CD8-positive, alpha-beta T cell (primary cell): ENCODE measurements at regions of chr17 and their contacts with region 1.

Region 1: DNA sequence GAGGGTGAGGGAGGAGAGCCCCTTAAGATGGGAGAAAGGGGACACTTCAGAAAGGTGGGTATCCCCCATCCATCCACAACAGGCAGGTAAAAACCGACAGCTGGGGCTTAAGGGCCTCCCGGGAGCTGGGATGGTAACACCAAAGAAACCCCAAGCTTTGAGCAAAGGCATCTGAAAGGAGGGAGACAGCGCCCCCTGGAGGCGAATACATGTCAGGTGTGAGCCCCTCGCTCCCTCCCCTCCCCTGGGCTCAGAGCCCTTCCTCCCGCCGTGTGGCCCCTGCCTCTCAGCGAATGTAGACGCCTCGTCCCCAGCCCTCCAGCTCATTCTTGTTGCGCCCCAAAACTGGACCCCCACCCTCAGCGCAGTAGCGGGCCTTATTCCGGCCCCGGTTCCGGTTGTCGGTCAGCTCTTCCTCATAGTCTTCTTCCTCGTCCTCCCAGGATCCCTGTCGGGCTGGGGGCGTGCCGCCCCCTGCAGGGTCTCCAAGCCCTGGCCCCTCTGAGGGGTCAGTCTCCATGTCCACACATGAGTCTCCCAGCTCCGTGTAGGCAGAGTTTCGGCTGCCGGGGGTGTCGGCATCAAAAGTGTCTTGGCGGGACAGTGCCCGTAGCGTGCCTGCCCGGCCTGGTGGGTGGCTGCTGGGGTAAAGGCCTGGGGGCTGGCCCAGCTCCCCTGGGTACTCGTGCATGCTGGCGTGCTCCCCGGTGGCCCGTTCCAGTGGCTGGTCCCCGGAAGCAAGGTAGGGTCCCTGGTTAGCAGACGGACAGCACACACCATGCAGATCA is 9.1 kb upstream of the ARL5C start:
- DNase-seq: peak; percentile 56 to 89 (median 83)
- ATAC-seq: peak; percentile 93
- H3K4me3 ChIP-seq: no peak overlapping the region
- H3K4me3 Mint-ChIP-seq: no peak overlapping the region
- H3K27ac ChIP-seq: no peak overlapping the region
- H3K27ac Mint-ChIP-seq: no peak overlapping the region
- H3K4me1 ChIP-seq: peaks cover 15% of the 10 kb centered on the region
- H3K4me1 Mint-ChIP-seq: peaks cover 23% of the 10 kb centered on the region
- H3K27me3 ChIP-seq: no peaks in the 10 kb centered on the region
- H3K27me3 Mint-ChIP-seq: no peaks in the 10 kb centered on the region
- CTCF ChIP-seq: peak; percentile 85

Region 2: GRCh38 chr17:38761612-38762011 is 413.5 kb before region 1 on chr17:
- CTCF ChIA-PET with region 1: no interaction called
- POLR2A ChIA-PET with region 1: no interaction called
- intact Hi-C with region 1: loop called in 1 of 2 experiments (anchors 5 kb)
- DNase-seq: peak in 3 of 9 experiments; percentile 41 to 52 (median 49)
- ATAC-seq: peak; percentile 52
- H3K4me3 ChIP-seq: no peak overlapping the region
- H3K4me3 Mint-ChIP-seq: no peak overlapping the region
- H3K27ac ChIP-seq: peak overlapping the region in 1 of 2 experiments; percentile 3
- H3K27ac Mint-ChIP-seq: peak overlapping the region; percentile 60
- H3K4me1 ChIP-seq: no peaks in the 10 kb centered on the region
- H3K4me1 Mint-ChIP-seq: peaks cover 8% of the 10 kb centered on the region
- H3K27me3 ChIP-seq: no peaks in the 10 kb centered on the region
- H3K27me3 Mint-ChIP-seq: no peaks in the 10 kb centered on the region
- CTCF ChIP-seq: no peak

Region 3: GRCh38 chr17:39062846-39063680 is 112.0 kb before region 1 on chr17:
- CTCF ChIA-PET with region 1: interaction called, 15 read pairs
- POLR2A ChIA-PET with region 1: no interaction called
- intact Hi-C with region 1: no loop called
- DNase-seq: no peak
- ATAC-seq: no peak
- H3K4me3 ChIP-seq: no peak overlapping the region
- H3K4me3 Mint-ChIP-seq: no peak overlapping the region
- H3K27ac ChIP-seq: no peak overlapping the region
- H3K27ac Mint-ChIP-seq: no peak overlapping the region
- H3K4me1 ChIP-seq: no peaks in the 10 kb centered on the region
- H3K4me1 Mint-ChIP-seq: peaks cover 13% of the 10 kb centered on the region
- H3K27me3 ChIP-seq: no peaks in the 10 kb centered on the region
- H3K27me3 Mint-ChIP-seq: no peaks in the 10 kb centered on the region
- CTCF ChIP-seq: no peak

Region 4: GRCh38 chr17:39164675-39165143 is 10.4 kb before region 1 on chr17:
- CTCF ChIA-PET with region 1: interaction called, 142 read pairs
- POLR2A ChIA-PET with region 1: interaction called, 3 read pairs
- intact Hi-C with region 1: no loop called
- DNase-seq: peak; percentile 53 to 90 (median 74)
- ATAC-seq: peak; percentile 89
- H3K4me3 ChIP-seq: peak overlapping the region; percentile 68 to 95
- H3K4me3 Mint-ChIP-seq: peak overlapping the region; percentile 91
- H3K27ac ChIP-seq: peak overlapping the region in 1 of 2 experiments; percentile 21
- H3K27ac Mint-ChIP-seq: peak overlapping the region; percentile 67
- H3K4me1 ChIP-seq: peaks cover 20% of the 10 kb centered on the region
- H3K4me1 Mint-ChIP-seq: peaks cover 33% of the 10 kb centered on the region
- H3K27me3 ChIP-seq: peaks cover 0 to 3% of the 10 kb centered on the region in 2 experiments
- H3K27me3 Mint-ChIP-seq: peaks cover 11% of the 10 kb centered on the region
- CTCF ChIP-seq: peak; percentile 80

Region 5: DNA sequence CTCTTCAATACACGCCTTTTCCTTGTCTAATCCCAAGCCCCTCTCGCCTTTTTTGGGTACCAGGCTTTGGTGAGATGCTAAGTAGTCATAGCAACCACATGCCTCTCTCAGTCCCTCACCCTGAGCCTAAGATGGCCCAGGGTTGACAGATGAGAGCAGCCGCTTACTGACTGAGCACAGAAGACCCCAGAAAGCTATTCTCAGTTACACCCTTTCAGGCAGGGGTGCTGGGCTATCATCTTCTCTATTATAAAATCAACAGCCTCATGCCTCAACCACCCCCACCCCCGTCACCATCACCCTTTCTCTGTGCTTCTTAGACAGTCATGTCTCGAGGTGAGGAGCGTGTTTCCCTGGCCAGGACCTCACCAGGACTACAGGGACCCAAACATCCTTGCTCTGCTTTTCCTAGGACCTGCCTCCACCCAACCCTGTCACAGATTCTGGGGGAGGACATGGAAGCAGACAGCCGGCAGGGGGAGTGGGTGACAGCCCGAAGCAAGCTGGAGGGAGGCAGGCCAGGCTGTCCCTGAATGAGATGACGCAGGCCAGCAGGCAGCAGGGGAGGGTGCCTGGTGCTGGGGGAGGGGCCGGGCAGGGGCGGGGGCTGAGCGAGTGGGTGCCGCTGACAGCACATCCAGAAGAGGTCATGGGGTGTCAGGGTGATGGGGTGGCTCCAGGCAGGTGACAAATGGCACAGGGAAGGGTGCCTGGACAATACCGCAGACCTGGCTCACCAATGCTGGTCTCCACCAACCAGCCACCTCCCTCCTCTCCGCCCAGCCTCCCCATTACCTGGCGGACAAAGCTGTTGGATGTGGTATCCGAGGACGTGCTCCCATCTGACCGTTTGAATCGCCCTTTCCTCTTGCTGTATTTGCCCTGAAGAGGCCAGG is 19.2 kb after region 1 on chr17:
- CTCF ChIA-PET with region 1: interaction called, 45 read pairs
- POLR2A ChIA-PET with region 1: interaction called, 6 read pairs
- intact Hi-C with region 1: no loop called
- DNase-seq: no peak
- ATAC-seq: no peak
- H3K4me3 ChIP-seq: no peak overlapping the region
- H3K4me3 Mint-ChIP-seq: no peak overlapping the region
- H3K27ac ChIP-seq: no peak overlapping the region
- H3K27ac Mint-ChIP-seq: peak overlapping the region; percentile 62
- H3K4me1 ChIP-seq: peaks cover 28% of the 10 kb centered on the region
- H3K4me1 Mint-ChIP-seq: peaks cover 43% of the 10 kb centered on the region
- H3K27me3 ChIP-seq: no peaks in the 10 kb centered on the region
- H3K27me3 Mint-ChIP-seq: no peaks in the 10 kb centered on the region
- CTCF ChIP-seq: no peak

Region 6: DNA sequence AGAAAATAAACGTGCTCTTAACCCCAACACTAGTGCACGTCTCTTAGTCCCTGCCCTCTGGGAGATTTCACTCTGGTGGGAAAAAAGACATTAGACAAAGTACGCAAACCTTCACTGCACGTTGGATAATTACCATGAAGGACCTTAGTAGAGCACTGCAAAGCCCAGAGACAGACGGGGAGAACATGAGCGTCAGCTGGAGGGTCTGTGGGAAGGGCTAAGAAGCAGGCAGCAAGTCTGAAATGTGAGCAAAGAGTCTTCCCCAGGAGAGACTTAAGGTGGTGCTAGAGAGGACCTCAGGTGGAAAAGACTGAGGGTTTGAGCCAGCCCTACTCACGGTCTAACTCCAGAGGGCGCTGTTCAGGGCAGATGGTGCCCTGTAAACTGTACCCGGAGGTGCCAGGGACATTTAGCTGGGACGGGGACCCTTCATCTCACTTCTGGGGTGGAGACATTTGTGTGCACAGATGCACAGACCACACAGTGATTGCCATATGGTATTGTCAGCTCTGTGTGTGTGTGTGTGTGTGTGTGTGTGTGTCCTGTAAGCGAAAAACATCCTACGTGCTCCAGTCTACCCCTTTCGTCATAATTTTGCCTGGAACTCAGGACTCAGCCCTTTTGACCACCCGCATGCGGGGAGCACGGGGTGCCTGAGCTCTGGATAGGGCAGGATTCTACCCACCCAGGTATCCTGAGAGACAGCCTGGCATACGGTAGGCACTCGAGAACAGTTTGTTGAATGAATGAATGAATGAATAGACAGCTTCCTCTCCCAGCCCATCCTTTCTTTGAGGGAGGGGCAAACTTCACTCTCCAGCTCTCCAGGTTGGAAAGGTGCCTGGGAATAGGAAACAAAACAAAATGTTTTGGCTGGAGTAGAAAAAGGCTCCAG is 60.7 kb after region 1 on chr17:
- CTCF ChIA-PET with region 1: interaction called, 21 read pairs
- POLR2A ChIA-PET with region 1: no interaction called
- intact Hi-C with region 1: no loop called
- DNase-seq: peak in 6 of 9 experiments; percentile 32 to 80 (median 60)
- ATAC-seq: peak; percentile 42
- H3K4me3 ChIP-seq: no peak overlapping the region
- H3K4me3 Mint-ChIP-seq: no peak overlapping the region
- H3K27ac ChIP-seq: peak overlapping the region in 1 of 2 experiments; percentile 48
- H3K27ac Mint-ChIP-seq: peak overlapping the region; percentile 79
- H3K4me1 ChIP-seq: peaks cover 55% of the 10 kb centered on the region
- H3K4me1 Mint-ChIP-seq: peaks cover 38% of the 10 kb centered on the region
- H3K27me3 ChIP-seq: no peaks in the 10 kb centered on the region
- H3K27me3 Mint-ChIP-seq: peaks cover 8% of the 10 kb centered on the region
- CTCF ChIP-seq: peak; percentile 59